ENCODE measurements at regions of chr1 and their contacts with region 1.

Region 1: GRCh38 chr1:9494929-9495758 is 44.1 kb upstream of the SLC25A33 start:
- DNase-seq: peak; percentile 45 to 82 (median 64)
- H3K4me3 ChIP-seq: no peak overlapping the region
- H3K27ac ChIP-seq: no peak overlapping the region
- H3K4me1 ChIP-seq: no peaks in the 10 kb centered on the region
- H3K27me3 ChIP-seq: no peaks in the 10 kb centered on the region
- CTCF ChIP-seq: peak; percentile 88 to 96 (median 94)
- EP300 ChIP-seq: no peak
- POLR2A ChIP-seq: no peak

Region 2: GRCh38 chr1:9110669-9111356 is 384.3 kb before region 1 on chr1:
- intact Hi-C with region 1: loop called in 2 of 4 experiments (anchors 2 to 10 kb)
- DNase-seq: peak; percentile 92 to 97 (median 95)
- H3K4me3 ChIP-seq: no peak overlapping the region
- H3K27ac ChIP-seq: no peak overlapping the region
- H3K4me1 ChIP-seq: peaks cover 2% of the 10 kb centered on the region
- H3K27me3 ChIP-seq: no peaks in the 10 kb centered on the region
- CTCF ChIP-seq: peak; percentile 84 to 97 (median 92)
- EP300 ChIP-seq: no peak
- POLR2A ChIP-seq: peak; percentile 12

Region 3: GRCh38 chr1:9269078-9269501 is 226.1 kb before region 1 on chr1:
- intact Hi-C with region 1: loop called in 3 of 4 experiments (anchors 2 to 5 kb)
- DNase-seq: no peak
- H3K4me3 ChIP-seq: no peak overlapping the region
- H3K27ac ChIP-seq: no peak overlapping the region
- H3K4me1 ChIP-seq: peaks cover 3% of the 10 kb centered on the region
- H3K27me3 ChIP-seq: no peaks in the 10 kb centered on the region
- CTCF ChIP-seq: no peak
- EP300 ChIP-seq: no peak
- POLR2A ChIP-seq: no peak

Region 4: GRCh38 chr1:9466780-9467758 is 28.1 kb before region 1 on chr1:
- intact Hi-C with region 1: no loop called
- DNase-seq: peak in 4 of 5 donors; percentile 41 to 68 (median 60)
- H3K4me3 ChIP-seq: peak overlapping the region; percentile 3
- H3K27ac ChIP-seq: peak overlapping the region in 1 of 2 donors; percentile 38
- H3K4me1 ChIP-seq: peaks cover 4% of the 10 kb centered on the region
- H3K27me3 ChIP-seq: no peaks in the 10 kb centered on the region
- CTCF ChIP-seq: no peak
- EP300 ChIP-seq: no peak
- POLR2A ChIP-seq: no peak

Region 5: GRCh38 chr1:9573723-9574122 is 78.6 kb after region 1 on chr1:
- intact Hi-C with region 1: loop called (anchors 5 kb)
- DNase-seq: no peak
- H3K4me3 ChIP-seq: no peak overlapping the region
- H3K27ac ChIP-seq: no peak overlapping the region
- H3K4me1 ChIP-seq: peaks cover 2% of the 10 kb centered on the region
- H3K27me3 ChIP-seq: no peaks in the 10 kb centered on the region
- CTCF ChIP-seq: peak in 2 of 3 donors; percentile 29 to 44
- EP300 ChIP-seq: no peak
- POLR2A ChIP-seq: no peak

Region 6: DNA sequence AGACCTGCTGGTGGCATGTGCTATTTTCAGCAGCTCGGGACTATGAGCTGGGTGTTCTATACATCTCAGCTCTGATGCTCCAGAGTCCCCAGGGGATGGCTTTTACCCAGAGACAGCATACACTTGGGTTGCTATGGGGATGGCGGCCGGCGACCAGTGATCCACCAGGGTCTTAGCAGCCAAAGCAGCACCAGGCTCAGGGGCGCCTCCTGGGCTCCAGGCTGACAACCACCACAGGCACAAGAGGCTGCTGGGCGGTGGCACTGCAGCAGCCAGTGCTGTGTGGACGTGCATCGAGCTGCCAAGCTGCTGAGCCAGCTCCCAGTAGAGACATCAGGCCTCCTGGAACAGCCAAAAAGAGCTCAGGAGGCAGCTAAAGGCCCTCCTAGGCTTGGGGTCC is 366.2 kb after region 1 on chr1:
- intact Hi-C with region 1: no loop called
- DNase-seq: no peak
- H3K4me3 ChIP-seq: no peak overlapping the region
- H3K27ac ChIP-seq: no peak overlapping the region
- H3K4me1 ChIP-seq: peaks cover 9% of the 10 kb centered on the region
- H3K27me3 ChIP-seq: no peaks in the 10 kb centered on the region
- CTCF ChIP-seq: no peak
- EP300 ChIP-seq: no peak
- POLR2A ChIP-seq: no peak

Region 7: GRCh38 chr1:10210841-10211804 is 716.0 kb after region 1 on chr1:
- intact Hi-C with region 1: no loop called
- DNase-seq: peak; percentile 86 to 96 (median 93)
- H3K4me3 ChIP-seq: peak overlapping the region; percentile 89
- H3K27ac ChIP-seq: peak overlapping the region; percentile 96 to 99
- H3K4me1 ChIP-seq: peaks cover 12% of the 10 kb centered on the region
- H3K27me3 ChIP-seq: no peaks in the 10 kb centered on the region
- CTCF ChIP-seq: no peak
- EP300 ChIP-seq: no peak
- POLR2A ChIP-seq: peak; percentile 28